ENCODE measurements at regions of chr20 and their contacts with region 1.

Region 1: DNA sequence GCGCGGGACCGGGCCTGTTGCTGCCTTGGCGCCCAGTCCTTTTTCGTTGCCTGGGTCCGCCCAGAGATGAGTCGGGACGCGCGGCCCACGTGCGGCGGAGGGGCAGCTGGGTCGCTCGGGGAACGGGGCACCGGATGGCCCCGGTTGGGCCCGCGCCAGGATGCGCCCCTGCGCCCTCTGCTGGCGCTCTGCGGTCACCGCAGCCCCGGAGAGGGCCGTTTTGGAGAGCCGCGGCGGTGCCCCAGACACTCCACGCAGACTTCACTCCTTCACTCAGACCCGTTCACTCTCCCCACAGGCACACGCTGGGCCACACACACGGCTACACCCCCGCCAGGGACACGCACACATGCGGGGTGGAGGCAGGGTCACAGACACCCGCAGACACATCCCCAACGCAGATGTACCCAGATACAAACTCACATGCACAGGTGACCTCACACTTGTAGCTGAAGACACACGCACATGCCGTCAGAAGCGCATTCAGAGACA is 38.8 kb downstream of the SRC start:
- DNase-seq: peak; percentile 46
- H3K4me3 ChIP-seq: peak overlapping the region in 1 of 3 donors; percentile 17
- H3K27ac ChIP-seq: no peak overlapping the region
- H3K4me1 ChIP-seq: peaks cover 0 to 4% of the 10 kb centered on the region in 2 donors
- H3K27me3 ChIP-seq: no peaks in the 10 kb centered on the region
- CTCF ChIP-seq: peak; percentile 69 to 90 (median 86)
- POLR2A ChIP-seq: no peak

Region 2: DNA sequence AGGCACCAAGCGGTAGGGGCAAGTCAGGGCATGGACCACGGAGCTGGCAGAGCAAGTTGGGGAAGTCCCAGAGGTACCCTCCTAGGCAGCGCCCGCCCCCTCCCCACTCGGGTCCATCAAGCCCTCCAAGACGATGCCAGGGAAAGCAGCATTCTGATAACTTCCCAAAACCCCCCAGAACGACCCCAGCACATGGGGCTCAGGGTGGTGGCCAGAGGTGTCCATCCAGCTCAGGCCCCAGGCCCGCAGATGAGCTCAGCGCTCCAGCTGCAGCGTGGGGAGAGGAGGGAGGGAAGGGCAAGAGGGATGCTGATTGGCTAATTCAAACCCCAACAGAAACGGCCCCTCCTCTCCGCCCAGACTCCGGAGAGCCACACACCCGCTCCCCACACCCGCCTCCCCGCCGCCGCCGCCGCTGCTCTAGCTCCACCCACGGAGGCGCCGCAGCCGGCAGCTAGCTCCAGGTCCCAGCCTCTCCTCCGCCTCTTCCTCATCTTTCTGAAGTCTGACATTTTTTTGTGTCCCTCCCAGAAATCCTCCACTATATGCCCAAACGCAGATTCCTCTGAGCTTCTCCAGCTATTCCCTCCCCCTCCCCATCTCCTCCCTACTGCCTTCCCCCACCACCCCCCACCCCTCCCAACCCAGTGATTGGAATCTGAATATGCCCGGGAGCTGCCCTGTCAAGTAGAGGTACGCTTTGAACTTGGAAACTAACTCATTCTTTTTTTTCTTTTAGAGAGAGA is 549.1 kb before region 1 on chr20:
- intact Hi-C with region 1: no loop called
- DNase-seq: peak; percentile 93
- H3K4me3 ChIP-seq: no peak overlapping the region
- H3K27ac ChIP-seq: peak overlapping the region; percentile 39 to 80 (median 61)
- H3K4me1 ChIP-seq: peaks cover 43 to 55% of the 10 kb centered on the region in 2 donors
- H3K27me3 ChIP-seq: no peaks in the 10 kb centered on the region
- CTCF ChIP-seq: no peak
- POLR2A ChIP-seq: peak in 1 of 2 donors; percentile 9

Region 3: DNA sequence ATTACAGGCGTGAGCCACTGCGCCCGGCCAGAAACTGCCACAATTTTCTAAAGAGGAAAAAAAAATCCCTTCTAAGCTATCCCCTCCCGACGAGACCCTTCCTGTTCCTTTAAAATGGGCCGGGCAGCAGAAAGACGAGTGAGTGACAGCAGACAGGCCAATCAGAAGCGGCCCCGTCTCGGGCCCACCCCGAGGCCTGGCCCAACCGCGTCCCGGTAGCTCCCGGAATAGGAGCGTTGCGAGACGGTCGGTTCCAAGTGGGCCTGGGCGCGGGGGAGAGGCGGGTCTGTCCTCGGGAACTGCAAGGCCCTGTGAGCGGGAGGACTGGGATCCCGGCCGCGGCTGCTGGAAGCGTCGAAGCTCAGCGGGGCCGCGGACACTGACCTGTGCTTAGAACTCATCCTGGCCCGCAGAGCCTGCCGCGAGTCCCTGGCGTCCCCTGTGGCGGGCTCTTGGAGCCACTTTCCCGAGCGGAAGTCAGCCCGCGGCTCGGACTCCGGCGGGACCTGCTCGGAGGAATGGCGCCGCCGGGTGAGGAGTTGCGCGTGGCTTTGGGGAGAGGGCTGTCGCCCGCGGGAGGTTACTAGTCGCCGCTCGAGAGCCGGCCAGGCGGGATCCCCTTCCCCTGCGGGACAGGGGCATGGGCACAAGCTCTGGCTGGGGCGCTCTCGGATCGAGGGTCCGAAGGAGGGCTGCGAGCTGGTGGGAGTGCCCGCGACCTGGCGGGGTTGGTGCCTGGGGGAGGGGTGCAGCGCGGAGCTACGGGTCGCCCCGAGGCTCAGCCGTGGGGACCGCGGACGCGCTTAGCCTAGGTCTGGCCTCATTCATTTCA is 205.7 kb before region 1 on chr20 and contains the starts of genes MROH8 and RPN2:
- intact Hi-C with region 1: no loop called
- DNase-seq: peak; percentile 98
- H3K4me3 ChIP-seq: peak within 1 kb of the TSS; percentile 48 to 84 (median 81)
- H3K27ac ChIP-seq: peak within 1 kb of the TSS; percentile 89 to 99 (median 98)
- H3K4me1 ChIP-seq: peaks cover 15 to 25% of the 10 kb centered on the region in 2 donors
- H3K27me3 ChIP-seq: no peaks in the 10 kb centered on the region
- CTCF ChIP-seq: no peak
- POLR2A ChIP-seq: peak in 1 of 2 donors; percentile 65
- total RNA-seq, gene MROH8: 2.3 to 7.5 (median 3.4) TPM
- total RNA-seq, gene RPN2: 175 to 342 (median 296) TPM

Region 4: DNA sequence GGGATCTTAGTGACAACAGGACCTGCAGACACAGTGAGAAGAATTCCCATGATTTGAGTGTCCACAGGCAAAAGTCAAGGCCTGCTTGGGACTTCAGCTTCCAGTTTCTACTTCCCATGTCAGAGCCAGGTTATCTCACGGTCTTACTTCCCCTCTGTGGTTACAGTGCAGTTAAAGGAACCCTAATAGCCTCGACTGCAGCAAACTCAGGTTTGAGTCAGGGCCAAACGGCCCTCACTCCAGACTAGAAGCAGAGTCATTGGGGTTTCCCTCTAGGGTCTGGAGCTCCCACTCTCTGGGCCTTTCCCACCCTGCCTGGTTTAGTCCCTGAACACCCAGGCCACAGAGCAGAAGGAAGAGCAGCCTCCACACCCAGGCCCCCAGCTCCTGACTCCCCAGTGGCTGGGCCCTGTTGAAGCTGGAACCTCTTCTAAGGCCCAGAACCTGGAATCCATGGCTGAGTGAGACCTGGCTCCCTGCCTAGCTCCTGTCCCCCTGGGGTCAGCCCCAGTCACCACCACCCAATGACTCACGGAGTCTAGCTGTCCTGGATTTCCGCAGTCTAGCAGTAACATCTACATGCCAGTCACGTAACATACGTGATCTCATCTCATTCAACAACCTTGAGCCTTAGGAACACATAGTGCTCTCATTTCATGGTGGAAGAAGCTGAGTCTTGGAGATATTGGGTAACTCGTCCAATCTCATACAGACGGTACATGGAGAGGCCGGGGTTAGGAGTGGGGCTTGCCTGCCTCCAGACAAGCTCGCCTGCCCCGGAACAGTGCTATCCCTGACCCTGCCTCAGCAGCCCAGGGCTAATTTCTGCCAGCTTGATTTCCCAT is 113.9 kb before region 1 on chr20:
- intact Hi-C with region 1: loop called (anchors 2 kb)
- DNase-seq: no peak
- H3K4me3 ChIP-seq: no peak overlapping the region
- H3K27ac ChIP-seq: no peak overlapping the region
- H3K4me1 ChIP-seq: no peaks in the 10 kb centered on the region
- H3K27me3 ChIP-seq: no peaks in the 10 kb centered on the region
- CTCF ChIP-seq: no peak
- POLR2A ChIP-seq: no peak

Region 5: DNA sequence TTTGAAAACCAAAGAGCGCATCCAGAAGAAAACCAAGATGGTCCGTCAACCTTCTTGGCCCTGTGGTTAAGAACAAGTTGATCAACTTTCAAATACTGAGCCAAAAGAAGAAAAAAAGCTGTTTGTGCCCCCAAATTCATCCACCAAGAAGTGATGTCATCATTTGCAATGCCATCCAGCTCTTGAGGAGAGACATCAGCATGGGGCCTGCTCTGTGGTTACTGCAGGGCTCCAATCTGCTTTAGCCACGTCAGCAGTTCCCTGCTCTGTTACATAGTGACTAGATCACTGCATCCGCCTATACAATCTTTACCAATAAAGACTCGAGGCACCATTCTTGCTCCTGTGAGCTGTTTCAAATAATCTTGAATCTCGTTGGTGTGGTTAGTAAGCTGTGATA is 217.9 kb after region 1 on chr20:
- intact Hi-C with region 1: no loop called
- DNase-seq: no peak
- H3K4me3 ChIP-seq: no peak overlapping the region
- H3K27ac ChIP-seq: no peak overlapping the region
- H3K4me1 ChIP-seq: no peaks in the 10 kb centered on the region
- H3K27me3 ChIP-seq: no peaks in the 10 kb centered on the region
- CTCF ChIP-seq: no peak
- POLR2A ChIP-seq: no peak